ENCODE measurements at regions of chr19 and their contacts with region 1.

Region 1: GRCh38 chr19:5719961-5720790 is at the starts of genes CATSPERD and LONP1:
- DNase-seq: peak; percentile 96 to 100 (median 98)
- ATAC-seq: peak; percentile 95
- H3K4me3 ChIP-seq: peak within 1 kb of the TSS; percentile 86
- H3K4me3 Mint-ChIP-seq: peak within 1 kb of the TSS; percentile 87 to 96 (median 93)
- H3K27ac ChIP-seq: peak within 1 kb of the TSS; percentile 97
- H3K27ac Mint-ChIP-seq: peak within 1 kb of the TSS; percentile 94 to 98 (median 95)
- H3K4me1 ChIP-seq: peaks cover 12 to 16% of the 10 kb centered on the region in 2 donors
- H3K4me1 Mint-ChIP-seq: peaks cover 9 to 42% (median 29%) of the 10 kb centered on the region in 7 donors
- H3K27me3 ChIP-seq: no peaks in the 10 kb centered on the region
- H3K27me3 Mint-ChIP-seq: peaks cover 0 to 2% (median 0%) of the 10 kb centered on the region in 5 donors
- total RNA-seq, gene CATSPERD: 0.07 TPM in 1 of 5 experiments, not detected in the others
- total RNA-seq, gene LONP1: 62.8 to 102 (median 74.8) TPM

Region 2: GRCh38 chr19:5680437-5681368 is 39.5 kb before region 1 on chr19 and contains the starts of genes HSD11B1L and MICOS13:
- CTCF ChIA-PET with region 1: no interaction called
- POLR2A ChIA-PET with region 1: interaction called, 3 read pairs
- intact Hi-C with region 1: loop called (anchors 1 kb)
- DNase-seq: peak; percentile 98 to 99 (median 99)
- ATAC-seq: peak; percentile 96
- H3K4me3 ChIP-seq: peak within 1 kb of the TSS; percentile 100
- H3K4me3 Mint-ChIP-seq: peak within 1 kb of the TSS; percentile 85 to 97 (median 94)
- H3K27ac ChIP-seq: peak within 1 kb of the TSS; percentile 98
- H3K27ac Mint-ChIP-seq: peak within 1 kb of the TSS; percentile 94 to 100 (median 97)
- H3K4me1 ChIP-seq: peaks cover 8 to 18% of the 10 kb centered on the region in 2 donors
- H3K4me1 Mint-ChIP-seq: peaks cover 20 to 33% (median 25%) of the 10 kb centered on the region in 7 donors
- H3K27me3 ChIP-seq: no peaks in the 10 kb centered on the region
- H3K27me3 Mint-ChIP-seq: peaks cover 0 to 18% (median 0%) of the 10 kb centered on the region in 5 donors
- total RNA-seq, gene HSD11B1L: 2.8 to 5.2 (median 3.6) TPM
- total RNA-seq, gene MICOS13: 26.1 to 49.3 (median 38.4) TPM

Region 3: DNA sequence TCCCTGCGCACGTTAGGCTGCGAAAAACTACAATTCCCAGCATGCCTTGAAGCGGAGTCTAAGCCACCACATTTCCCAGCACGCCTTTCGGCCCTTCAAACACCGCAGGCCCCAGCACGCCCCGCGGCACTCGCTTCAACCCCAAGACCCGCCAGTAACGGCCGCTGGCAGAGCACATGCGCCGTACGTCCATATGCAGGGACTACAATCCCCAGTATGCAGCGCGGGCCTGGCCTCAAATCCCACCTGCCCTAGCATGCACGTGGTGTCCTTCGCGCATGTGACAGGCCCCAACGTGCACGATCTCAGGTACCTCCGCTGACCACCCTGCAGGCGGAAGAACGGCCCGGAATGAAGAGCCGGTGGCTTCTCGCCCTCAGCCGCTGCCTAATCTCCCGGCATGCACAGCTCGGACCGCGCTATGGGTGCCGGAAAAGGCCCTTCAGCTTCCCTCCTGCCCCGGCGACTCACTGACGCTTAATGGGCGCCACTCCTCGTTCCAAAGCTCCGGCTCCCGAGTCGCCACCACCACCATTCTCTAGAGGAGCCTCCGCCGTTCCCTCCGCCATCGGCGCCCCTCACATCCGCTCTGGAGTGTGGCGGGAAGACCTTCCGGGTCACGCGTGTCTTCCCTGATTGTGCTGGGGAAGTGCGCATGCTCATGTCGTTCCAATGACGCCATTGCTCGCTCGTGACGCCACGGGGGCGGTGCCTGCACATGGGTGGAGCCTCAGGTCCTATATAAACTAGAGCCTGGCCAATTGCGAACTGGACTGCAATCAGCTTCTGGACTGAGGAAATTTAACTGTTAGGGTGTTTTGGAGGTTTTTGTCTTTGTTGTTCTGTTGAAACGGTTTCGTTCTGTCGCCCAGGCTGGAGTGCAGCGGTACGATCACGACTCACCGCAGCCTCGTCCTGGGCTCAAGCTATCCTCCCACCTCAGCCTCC is 70.7 kb after region 1 on chr19 and contains the start of gene DUS3L:
- CTCF ChIA-PET with region 1: interaction called, 3 read pairs
- POLR2A ChIA-PET with region 1: interaction called, 11 read pairs
- intact Hi-C with region 1: no loop called
- DNase-seq: peak; percentile 90 to 97 (median 94)
- ATAC-seq: peak; percentile 97
- H3K4me3 ChIP-seq: peak within 1 kb of the TSS; percentile 95
- H3K4me3 Mint-ChIP-seq: peak within 1 kb of the TSS; percentile 94 to 100 (median 100)
- H3K27ac ChIP-seq: peak within 1 kb of the TSS; percentile 91
- H3K27ac Mint-ChIP-seq: peak within 1 kb of the TSS; percentile 99 to 100 (median 100)
- H3K4me1 ChIP-seq: peaks cover 8 to 12% of the 10 kb centered on the region in 2 donors
- H3K4me1 Mint-ChIP-seq: peaks cover 6 to 22% (median 15%) of the 10 kb centered on the region in 7 donors
- H3K27me3 ChIP-seq: no peaks in the 10 kb centered on the region
- H3K27me3 Mint-ChIP-seq: no peaks in the 10 kb centered on the region
- total RNA-seq, gene DUS3L: 53.2 to 179 (median 82.7) TPM

Region 4: GRCh38 chr19:5977785-5978605 is 257.8 kb after region 1 on chr19 and contains the start of gene RANBP3:
- CTCF ChIA-PET with region 1: no interaction called
- POLR2A ChIA-PET with region 1: no interaction called
- intact Hi-C with region 1: loop called (anchors 1 to 5 kb)
- DNase-seq: peak; percentile 94 to 99 (median 99)
- ATAC-seq: peak; percentile 94
- H3K4me3 ChIP-seq: peak within 1 kb of the TSS; percentile 78
- H3K4me3 Mint-ChIP-seq: peak within 1 kb of the TSS; percentile 92 to 99 (median 96)
- H3K27ac ChIP-seq: peak within 1 kb of the TSS; percentile 94
- H3K27ac Mint-ChIP-seq: peak within 1 kb of the TSS; percentile 91 to 97 (median 95)
- H3K4me1 ChIP-seq: peaks cover 31 to 45% of the 10 kb centered on the region in 2 donors
- H3K4me1 Mint-ChIP-seq: peaks cover 42 to 65% (median 55%) of the 10 kb centered on the region in 7 donors
- H3K27me3 ChIP-seq: no peaks in the 10 kb centered on the region
- H3K27me3 Mint-ChIP-seq: peaks cover 0 to 2% (median 0%) of the 10 kb centered on the region in 5 donors
- total RNA-seq, gene RANBP3: 88.3 to 104 (median 94.0) TPM

Region 5: DNA sequence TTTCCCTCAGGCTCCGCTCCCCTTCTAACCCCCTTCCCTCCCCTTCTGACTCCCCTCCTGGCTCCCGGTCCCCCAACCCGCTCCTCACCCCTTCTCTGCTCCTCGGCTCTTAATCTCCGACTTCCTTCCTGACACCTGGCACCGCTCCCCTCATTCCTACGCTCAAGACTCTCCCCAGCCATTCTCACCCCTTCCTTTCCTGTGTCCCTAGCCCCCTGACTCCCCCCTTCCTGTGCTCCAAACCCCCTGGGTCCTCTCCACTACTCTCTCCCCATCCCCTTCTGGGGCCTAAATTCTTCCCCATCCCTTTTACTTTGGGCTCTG is 641.8 kb after region 1 on chr19:
- CTCF ChIA-PET with region 1: no interaction called
- POLR2A ChIA-PET with region 1: no interaction called
- intact Hi-C with region 1: loop called in 1 of 2 experiments (anchors 1 kb)
- DNase-seq: no peak
- ATAC-seq: no peak
- H3K4me3 ChIP-seq: peak overlapping the region; percentile 76
- H3K4me3 Mint-ChIP-seq: peak overlapping the region; percentile 83 to 100 (median 97)
- H3K27ac ChIP-seq: peak overlapping the region; percentile 82
- H3K27ac Mint-ChIP-seq: peak overlapping the region; percentile 87 to 98 (median 96)
- H3K4me1 ChIP-seq: peaks cover 10 to 13% of the 10 kb centered on the region in 2 donors
- H3K4me1 Mint-ChIP-seq: peaks cover 10 to 37% (median 22%) of the 10 kb centered on the region in 7 donors
- H3K27me3 ChIP-seq: no peaks in the 10 kb centered on the region
- H3K27me3 Mint-ChIP-seq: no peaks in the 10 kb centered on the region